Activated CD4-positive, alpha-beta T cell treated with anti-CD3 and anti-CD28 coated beads for 36 hours (primary cell): ENCODE measurements at regions of chr12 and their contacts with region 1.

Region 1: GRCh38 chr12:25328072-25328712 is 77.5 kb upstream of the KRAS start:
- DNase-seq: no peak
- ATAC-seq: no peak
- H3K4me3 Mint-ChIP-seq: no peak overlapping the region
- H3K27ac Mint-ChIP-seq: no peak overlapping the region
- H3K4me1 Mint-ChIP-seq: peaks cover 23% of the 10 kb centered on the region
- H3K27me3 Mint-ChIP-seq: no peaks in the 10 kb centered on the region

Region 2: GRCh38 chr12:25276199-25276937 is 51.8 kb before region 1 on chr12:
- CTCF ChIA-PET with region 1: interaction called, 4 read pairs
- POLR2A ChIA-PET with region 1: no interaction called
- intact Hi-C with region 1: loop called (anchors 2 to 5 kb)
- DNase-seq: peak; percentile 90
- ATAC-seq: peak; percentile 97
- H3K4me3 Mint-ChIP-seq: peak overlapping the region; percentile 7
- H3K27ac Mint-ChIP-seq: peak overlapping the region; percentile 40
- H3K4me1 Mint-ChIP-seq: peaks cover 31% of the 10 kb centered on the region
- H3K27me3 Mint-ChIP-seq: no peaks in the 10 kb centered on the region

Region 3: GRCh38 chr12:25377469-25378177 is 49.4 kb after region 1 on chr12:
- CTCF ChIA-PET with region 1: no interaction called
- POLR2A ChIA-PET with region 1: no interaction called
- intact Hi-C with region 1: no loop called
- DNase-seq: peak; percentile 65
- ATAC-seq: peak; percentile 95
- H3K4me3 Mint-ChIP-seq: peak overlapping the region; percentile 2
- H3K27ac Mint-ChIP-seq: peak overlapping the region; percentile 53
- H3K4me1 Mint-ChIP-seq: peaks cover 53% of the 10 kb centered on the region
- H3K27me3 Mint-ChIP-seq: peaks cover 4% of the 10 kb centered on the region